ENCODE measurements at regions of chr6 and their contacts with region 1.

Region 1: DNA sequence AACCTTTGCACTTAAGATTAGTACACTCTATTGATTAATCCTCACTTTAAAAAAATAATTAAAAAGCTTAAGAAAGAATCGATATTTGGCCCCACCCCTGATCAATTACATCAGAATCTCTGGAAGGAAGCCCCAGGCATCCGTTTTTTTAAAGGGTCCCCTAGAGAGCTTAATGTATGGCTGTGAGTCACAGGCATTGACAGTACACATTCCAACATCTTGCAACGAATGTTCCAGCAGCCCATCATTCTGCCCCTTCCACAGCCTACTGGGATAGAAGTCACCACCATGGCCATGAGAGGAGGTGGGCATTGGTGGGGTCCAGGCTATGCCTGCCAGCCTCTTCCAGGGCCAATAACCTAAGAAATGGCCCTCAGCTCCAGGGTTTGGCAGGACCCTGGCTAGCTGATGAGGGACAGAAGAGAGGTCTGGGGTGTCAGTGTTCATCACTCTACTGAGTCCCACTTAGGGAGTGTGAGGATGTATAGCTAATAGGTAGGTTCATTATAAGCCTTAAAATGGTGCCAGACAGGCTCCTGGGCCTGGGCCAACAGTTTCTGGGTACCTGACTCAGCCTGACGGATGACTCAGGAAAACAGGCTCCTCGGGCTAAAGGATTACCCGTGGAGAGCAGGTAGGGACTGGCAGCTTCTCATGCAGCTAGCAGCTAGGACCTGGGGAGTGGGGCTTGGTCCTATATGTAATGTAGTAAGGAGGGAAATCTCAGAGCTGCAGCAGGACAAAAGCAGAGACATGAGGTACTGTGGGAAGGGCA is 40.4 kb downstream of the MDGA1 start:
- DNase-seq: peak; percentile 91
- ATAC-seq: peak; percentile 90
- H3K4me3 ChIP-seq: no peak overlapping the region
- H3K27ac ChIP-seq: 0 out of 2 replicates have a peak overlapping the region, but pooled peaks have one; percentile 2
- H3K4me1 ChIP-seq: peaks cover 13% of the 10 kb centered on the region
- H3K27me3 ChIP-seq: no peaks in the 10 kb centered on the region
- CTCF ChIP-seq: no peak

Region 2: DNA sequence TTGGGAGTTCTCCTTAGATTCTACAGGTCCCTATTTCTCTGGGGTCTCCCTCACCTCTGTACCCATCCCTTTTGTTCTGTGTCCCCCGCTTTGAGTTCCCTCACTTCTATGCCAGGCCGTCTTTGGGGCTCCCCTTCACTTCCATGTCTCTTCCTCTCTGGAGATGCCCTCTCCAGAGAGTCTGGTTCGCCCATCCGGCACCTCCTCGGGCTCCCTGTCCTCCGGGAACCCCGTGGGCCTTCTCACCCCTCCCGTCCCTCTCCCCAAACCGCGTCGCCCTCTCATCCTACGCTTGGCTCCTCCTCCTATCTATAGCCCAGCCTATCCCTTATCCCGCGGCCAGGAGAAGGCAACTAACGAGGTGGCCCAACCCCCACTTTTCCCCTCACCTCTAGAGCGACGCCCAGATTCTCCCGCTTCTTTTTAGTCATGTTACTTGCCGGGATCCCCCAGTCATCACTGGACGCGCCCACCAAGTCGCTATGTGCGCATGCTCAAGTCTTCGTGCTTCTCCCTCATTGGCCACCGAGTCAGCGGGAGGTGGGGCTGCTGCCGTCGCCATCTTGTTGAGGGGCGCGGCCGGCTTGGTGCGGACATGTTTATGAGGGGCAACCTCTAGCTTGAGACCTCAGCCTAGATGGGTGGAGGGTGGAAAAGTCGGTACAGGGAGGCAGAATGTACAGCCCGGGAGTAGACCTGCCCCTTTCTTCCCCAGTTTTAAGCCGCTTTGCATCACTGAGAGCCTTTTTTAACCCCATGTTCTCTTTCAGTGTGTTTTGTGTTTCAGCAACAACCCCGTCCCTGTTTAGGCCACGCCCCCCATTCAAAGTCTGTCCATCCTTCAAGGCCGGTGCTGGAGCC is 157.6 kb before region 1 on chr6 and contains the start of gene CCDC167:
- CTCF ChIA-PET with region 1: no interaction called
- POLR2A ChIA-PET with region 1: no interaction called
- intact Hi-C with region 1: no loop called
- DNase-seq: peak; percentile 99
- ATAC-seq: peak; percentile 92
- H3K4me3 ChIP-seq: peak within 1 kb of the TSS; percentile 78
- H3K27ac ChIP-seq: peak within 1 kb of the TSS; percentile 17
- H3K4me1 ChIP-seq: peaks cover 6% of the 10 kb centered on the region; the same call in 1 of the 2 replicates
- H3K27me3 ChIP-seq: no peaks in the 10 kb centered on the region
- CTCF ChIP-seq: no peak
- total RNA-seq, gene CCDC167: 54.1 and 56.9 TPM in 2 replicates

Region 3: DNA sequence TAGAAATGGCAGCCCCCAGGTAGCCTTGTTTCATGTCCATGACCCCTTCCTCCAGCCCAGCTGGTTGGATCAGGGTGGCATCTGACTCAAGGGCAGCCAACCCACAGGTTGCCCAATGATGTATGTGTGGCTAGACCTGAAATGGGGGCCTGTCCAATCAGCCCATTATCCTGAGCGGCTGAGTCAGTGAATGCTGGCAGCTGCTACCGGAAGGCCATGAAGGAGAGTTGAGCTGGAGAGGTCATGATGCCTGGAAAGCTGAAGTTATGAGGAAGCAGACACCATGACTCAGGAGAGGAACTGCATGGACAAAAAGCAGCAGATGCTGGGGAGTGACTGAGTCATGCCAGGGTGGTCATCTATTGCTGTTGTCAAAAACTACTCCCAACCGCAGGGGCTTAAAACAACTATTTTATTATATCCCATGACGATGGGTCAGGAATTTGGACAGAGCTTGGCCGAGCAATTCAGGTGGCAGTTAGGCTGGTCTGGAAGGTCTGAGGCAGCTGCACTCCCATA is 27.0 kb before region 1 on chr6:
- CTCF ChIA-PET with region 1: no interaction called
- POLR2A ChIA-PET with region 1: no interaction called
- intact Hi-C with region 1: loop called (anchors 1 kb)
- DNase-seq: peak; percentile 98
- ATAC-seq: peak; percentile 90
- H3K4me3 ChIP-seq: no peak overlapping the region; the same call in 1 of the 2 replicates
- H3K27ac ChIP-seq: peak overlapping the region; percentile 94
- H3K4me1 ChIP-seq: peaks cover 36% of the 10 kb centered on the region
- H3K27me3 ChIP-seq: no peaks in the 10 kb centered on the region
- CTCF ChIP-seq: no peak

Region 4: DNA sequence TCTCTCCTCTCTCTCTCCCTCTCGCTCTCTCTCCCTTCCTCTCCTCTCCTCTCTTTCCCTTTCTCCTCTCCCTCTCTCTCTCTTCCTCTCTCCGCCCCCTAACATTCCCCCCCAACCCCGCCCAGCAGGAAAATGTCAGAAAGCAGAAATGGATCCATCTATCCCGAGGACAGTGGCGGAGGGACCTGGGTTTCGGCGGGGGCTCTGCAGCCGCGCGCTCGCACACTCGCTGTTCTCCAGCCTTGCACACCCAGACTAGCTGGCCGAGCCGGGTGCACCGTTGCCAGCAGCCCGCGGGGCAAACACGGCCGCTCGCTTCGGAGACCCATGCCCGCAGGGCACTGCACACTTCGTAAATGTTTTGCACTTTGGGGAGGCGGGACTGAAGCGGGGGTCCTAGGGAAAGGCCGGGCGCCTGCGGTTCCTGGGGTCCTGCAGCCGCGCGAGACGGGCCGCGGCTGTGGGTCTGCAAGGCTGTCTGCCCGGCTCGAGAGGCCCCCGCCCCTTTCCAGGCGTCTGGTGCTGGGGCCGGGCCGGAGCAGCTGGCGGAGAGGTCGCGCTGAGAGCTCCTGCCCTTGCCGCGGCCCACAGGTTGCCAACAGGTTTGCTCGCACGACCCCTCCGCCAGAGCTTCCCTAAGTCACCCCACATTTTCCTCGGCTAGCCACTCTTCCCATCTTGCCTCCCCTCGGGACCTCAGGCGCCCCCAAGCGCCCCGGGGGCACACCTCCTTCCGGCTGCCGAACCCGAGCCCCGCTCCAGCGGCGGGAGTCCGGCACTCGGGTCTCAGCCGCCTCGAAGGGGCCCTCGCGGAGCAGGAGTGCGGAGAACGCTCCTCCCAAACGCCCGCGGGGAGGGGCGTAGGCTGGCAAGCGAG is 41.2 kb after region 1 on chr6:
- CTCF ChIA-PET with region 1: no interaction called
- POLR2A ChIA-PET with region 1: no interaction called
- intact Hi-C with region 1: no loop called
- DNase-seq: peak; percentile 58
- ATAC-seq: peak; percentile 36
- H3K4me3 ChIP-seq: peak overlapping the region; percentile 85
- H3K27ac ChIP-seq: no peak overlapping the region
- H3K4me1 ChIP-seq: peaks cover 3% of the 10 kb centered on the region; the same call in 1 of the 2 replicates
- H3K27me3 ChIP-seq: peaks cover 17% of the 10 kb centered on the region
- CTCF ChIP-seq: 0 out of 2 replicates have a peak, but pooled peaks have one; percentile 20

Region 5: DNA sequence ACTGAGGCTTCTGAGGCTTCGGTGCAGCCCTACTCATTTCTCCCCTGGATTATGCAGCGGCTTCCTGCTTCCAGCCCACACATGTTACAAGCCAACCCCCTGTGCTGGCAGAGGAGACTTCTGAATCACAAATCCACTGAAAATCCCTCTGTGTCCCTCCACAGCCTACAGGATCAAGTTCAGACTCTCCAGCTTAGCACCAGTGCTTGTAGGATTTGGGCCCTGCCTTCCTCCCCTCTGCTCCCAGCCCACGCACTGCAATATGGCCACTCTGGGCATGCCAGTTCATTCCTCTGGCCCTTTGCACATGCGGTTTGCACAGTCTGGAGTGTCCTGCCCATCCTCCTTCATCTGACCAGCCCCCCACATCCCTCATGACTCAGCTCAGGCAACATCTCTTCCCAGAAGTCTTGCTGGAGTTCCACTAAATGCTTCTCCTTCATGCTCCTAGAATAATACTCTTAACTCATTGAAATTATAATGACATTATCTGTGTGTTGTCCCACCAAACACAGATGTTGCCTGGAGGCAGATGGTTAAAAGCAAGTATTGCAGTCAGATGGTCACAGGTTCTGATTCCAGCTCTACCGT is 56.3 kb after region 1 on chr6:
- CTCF ChIA-PET with region 1: no interaction called
- POLR2A ChIA-PET with region 1: no interaction called
- intact Hi-C with region 1: no loop called
- DNase-seq: no peak
- ATAC-seq: no peak
- H3K4me3 ChIP-seq: no peak overlapping the region
- H3K27ac ChIP-seq: no peak overlapping the region
- H3K4me1 ChIP-seq: peaks cover 12% of the 10 kb centered on the region
- H3K27me3 ChIP-seq: no peaks in the 10 kb centered on the region
- CTCF ChIP-seq: no peak

Measured in PC-3 (cell line).